ENCODE measurements at regions of chr16 and their contacts with region 1.

Region 1: GRCh38 chr16:74666425-74667254 is at the start of gene RFWD3:
- DNase-seq: peak; percentile 96
- ATAC-seq: peak; percentile 99
- H3K4me3 Mint-ChIP-seq: peak within 1 kb of the TSS; percentile 85
- H3K27ac Mint-ChIP-seq: peak within 1 kb of the TSS; percentile 93
- H3K4me1 Mint-ChIP-seq: peaks cover 17% of the 10 kb centered on the region
- H3K27me3 Mint-ChIP-seq: peaks cover 4% of the 10 kb centered on the region
- CTCF ChIP-seq: no peak
- total RNA-seq, gene RFWD3: 78.8 to 109 TPM (median 86.2 TPM) in 3 replicates

Region 2: DNA sequence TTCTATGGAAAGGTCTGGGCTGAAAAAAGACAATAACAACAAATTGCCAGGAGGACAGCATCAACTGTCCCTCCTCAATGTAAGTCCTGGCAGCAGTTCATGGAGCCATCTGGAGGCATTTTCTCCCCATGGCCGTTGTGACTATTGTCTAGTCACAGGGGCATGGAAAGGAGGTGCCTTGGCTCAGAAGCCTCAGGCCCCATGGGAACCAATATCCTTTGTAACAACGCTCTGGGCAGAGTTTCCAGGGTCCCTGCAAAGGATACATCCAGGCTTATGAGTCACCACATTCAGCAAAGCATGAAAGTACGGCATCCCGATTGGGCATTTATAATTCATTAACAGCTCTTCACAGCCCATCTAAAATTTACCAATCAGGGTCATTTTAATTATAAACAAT is 144.9 kb before region 1 on chr16:
- CTCF ChIA-PET with region 1: no interaction called
- POLR2A ChIA-PET with region 1: no interaction called
- DNase-seq: no peak
- ATAC-seq: no peak
- H3K4me3 Mint-ChIP-seq: no peak overlapping the region
- H3K27ac Mint-ChIP-seq: no peak overlapping the region
- H3K4me1 Mint-ChIP-seq: no peaks in the 10 kb centered on the region
- H3K27me3 Mint-ChIP-seq: no peaks in the 10 kb centered on the region
- CTCF ChIP-seq: no peak

Region 3: DNA sequence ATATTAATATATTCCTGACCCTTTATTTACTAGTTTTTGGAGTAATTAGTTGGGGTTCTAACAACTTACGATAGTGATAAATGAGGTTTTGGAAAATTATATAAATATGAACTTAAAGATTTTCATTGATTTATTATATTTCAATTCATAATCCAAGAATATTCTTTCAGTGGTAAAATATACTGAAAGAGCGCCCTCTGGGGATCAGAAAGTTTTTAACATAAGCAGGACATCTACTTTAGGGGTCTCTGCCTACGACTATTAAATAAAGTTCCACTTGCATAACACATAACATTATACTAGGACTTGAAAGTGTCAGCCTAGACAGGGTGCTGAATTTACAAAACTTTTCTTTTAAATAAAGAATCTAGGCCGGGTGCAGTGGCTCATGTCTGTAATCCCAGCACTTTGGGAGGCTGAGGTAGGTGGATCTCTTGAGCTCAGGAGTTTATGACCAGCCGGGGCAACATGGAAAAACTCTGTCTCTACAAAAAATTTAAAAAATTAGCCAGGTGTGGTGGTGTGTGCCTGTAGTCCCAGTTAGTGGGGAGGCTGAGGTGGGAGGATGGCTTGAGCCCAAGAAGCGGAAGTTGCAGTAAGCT is 15.6 kb before region 1 on chr16:
- CTCF ChIA-PET with region 1: interaction called, 11 read pairs
- POLR2A ChIA-PET with region 1: interaction called, 3 read pairs
- DNase-seq: no peak
- ATAC-seq: no peak
- H3K4me3 Mint-ChIP-seq: no peak overlapping the region
- H3K27ac Mint-ChIP-seq: no peak overlapping the region
- H3K4me1 Mint-ChIP-seq: no peaks in the 10 kb centered on the region
- H3K27me3 Mint-ChIP-seq: no peaks in the 10 kb centered on the region
- CTCF ChIP-seq: peak; percentile 27; the same call in 1 of the 2 replicates

Region 4: DNA sequence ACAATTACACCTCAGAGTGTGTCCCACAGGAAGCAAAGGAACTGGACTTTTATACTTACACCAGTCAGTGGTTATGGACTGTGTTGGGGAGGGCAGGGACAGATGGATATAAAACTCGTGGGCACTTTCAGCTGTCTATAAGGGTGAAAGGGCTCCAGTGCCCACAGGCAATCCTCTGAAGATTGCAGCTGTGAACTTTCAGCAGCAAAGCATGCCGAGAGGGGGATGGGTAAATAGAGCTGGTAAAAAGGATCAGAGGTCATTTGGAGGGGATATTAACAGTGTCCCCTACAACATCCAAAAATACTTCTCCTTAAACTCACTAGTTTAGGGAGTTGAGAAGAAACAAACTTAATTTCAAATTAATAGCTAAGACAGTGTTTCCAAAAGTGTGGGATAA is 13.3 kb after region 1 on chr16:
- CTCF ChIA-PET with region 1: interaction called, 35 read pairs
- POLR2A ChIA-PET with region 1: interaction called, 7 read pairs
- DNase-seq: no peak
- ATAC-seq: no peak
- H3K4me3 Mint-ChIP-seq: no peak overlapping the region
- H3K27ac Mint-ChIP-seq: no peak overlapping the region
- H3K4me1 Mint-ChIP-seq: peaks cover 9% of the 10 kb centered on the region
- H3K27me3 Mint-ChIP-seq: no peaks in the 10 kb centered on the region
- CTCF ChIP-seq: no peak

Region 5: GRCh38 chr16:74743668-74744299 is 77.1 kb after region 1 on chr16:
- CTCF ChIA-PET with region 1: no interaction called
- POLR2A ChIA-PET with region 1: no interaction called
- DNase-seq: no peak
- ATAC-seq: peak; percentile 51
- H3K4me3 Mint-ChIP-seq: no peak overlapping the region
- H3K27ac Mint-ChIP-seq: no peak overlapping the region
- H3K4me1 Mint-ChIP-seq: peaks cover 30% of the 10 kb centered on the region
- H3K27me3 Mint-ChIP-seq: no peaks in the 10 kb centered on the region
- CTCF ChIP-seq: no peak

Measured in WTC11 (cell line).